ENCODE measurements at regions of chr7 and their contacts with region 1.

Region 1: DNA sequence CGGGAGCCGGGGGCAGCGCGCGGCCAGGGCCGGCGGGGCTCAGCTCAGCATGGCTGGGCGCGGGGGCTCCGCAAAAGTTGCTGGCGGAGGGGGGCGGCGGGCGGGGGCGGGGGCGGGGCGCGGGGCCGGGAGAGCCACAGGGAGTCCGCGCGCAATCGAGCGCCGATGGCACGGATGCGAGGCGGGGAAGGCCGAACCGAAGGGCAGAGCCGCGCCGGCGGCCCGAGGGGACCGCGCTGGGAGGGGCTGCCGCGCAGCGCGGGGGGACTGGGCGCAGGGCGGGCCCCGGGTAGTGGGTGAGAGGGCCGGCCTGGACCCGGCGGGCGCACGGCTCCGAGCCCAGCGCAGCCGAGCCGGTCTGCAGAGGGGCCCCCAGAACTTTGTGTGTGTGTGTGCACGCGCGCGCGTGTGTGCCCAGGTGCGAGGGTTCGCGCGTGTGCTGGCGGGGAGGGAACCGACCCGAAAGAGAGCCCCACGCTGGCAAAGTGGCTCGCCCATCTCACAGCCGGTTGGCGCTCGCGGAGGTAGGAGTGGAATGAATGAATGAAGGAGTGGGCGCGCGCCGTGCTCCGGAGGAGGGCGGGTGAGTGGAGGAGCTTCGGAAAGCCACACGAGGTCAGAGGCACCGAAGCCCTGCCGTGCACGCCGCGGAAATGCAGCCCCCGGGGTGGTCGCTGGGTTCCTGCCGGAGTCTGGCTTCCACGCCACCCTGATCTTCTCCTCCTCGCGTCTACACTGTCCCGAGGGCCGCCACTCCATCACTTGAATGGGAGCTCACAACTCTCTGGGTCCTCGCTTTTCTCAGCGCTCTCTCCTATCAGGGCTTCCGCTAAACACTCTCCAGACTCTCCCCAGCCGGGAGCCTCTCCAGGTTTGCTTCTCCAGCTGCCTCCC is at the start of gene HIPK2:
- DNase-seq: peak; percentile 85
- H3K4me3 ChIP-seq: peak within 1 kb of the TSS; percentile 92
- H3K27ac ChIP-seq: peak within 1 kb of the TSS; percentile 65
- H3K4me1 ChIP-seq: peaks cover 16% of the 10 kb centered on the region
- H3K27me3 ChIP-seq: peaks cover 17% of the 10 kb centered on the region
- CTCF ChIP-seq: no peak
- total RNA-seq, gene HIPK2: 30.7 and 32.4 TPM in 2 replicates

Region 2: DNA sequence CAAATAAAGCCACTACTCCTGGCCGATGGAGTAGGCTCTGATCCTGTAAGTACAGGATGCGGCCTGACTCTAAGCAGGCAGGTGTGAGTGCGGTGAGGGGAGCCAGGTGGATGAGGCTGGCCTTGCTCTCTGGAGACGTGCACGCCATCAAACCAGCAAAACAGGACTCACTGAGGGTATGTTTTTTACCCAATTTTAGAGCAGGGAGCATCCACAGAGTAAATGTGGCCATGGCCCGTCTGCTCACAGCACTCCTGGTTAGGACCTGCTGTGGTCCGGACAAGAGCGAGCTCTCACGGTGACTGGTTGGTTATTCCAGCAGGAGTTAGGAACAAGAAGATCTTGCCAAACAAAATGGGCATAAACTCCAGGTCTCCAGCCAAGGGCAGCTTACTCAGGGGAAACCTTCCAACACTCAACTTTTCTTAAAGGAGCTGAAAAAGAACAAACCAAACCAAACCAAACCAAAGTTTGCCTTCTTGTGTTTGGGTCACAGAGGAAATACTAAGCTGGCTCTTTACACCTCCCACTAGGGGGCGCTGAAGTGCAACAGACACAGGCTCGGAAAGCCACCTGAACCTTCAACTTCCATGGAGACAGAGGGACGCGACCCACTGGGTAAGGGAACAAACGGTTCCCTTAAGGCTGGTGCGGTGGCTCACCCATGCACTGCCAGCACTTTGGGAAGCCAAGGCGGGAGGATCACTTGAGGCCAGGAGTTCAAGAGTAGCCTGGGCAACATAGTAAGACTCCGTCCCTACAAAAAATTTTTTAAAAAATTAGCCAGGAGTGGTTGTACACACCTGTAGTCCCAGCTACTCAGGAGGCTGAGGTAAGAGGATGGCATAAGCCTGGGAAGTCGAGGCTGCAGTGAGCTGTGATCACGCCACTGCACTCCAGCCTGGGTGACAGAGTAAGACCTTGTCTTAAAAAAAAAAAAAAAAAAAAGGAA is 132.3 kb before region 1 on chr7:
- CTCF ChIA-PET with region 1: no interaction called
- POLR2A ChIA-PET with region 1: no interaction called
- intact Hi-C with region 1: loop called (anchors 5 kb)
- DNase-seq: peak; percentile 87
- H3K4me3 ChIP-seq: no peak overlapping the region
- H3K27ac ChIP-seq: no peak overlapping the region
- H3K4me1 ChIP-seq: no peaks in the 10 kb centered on the region
- H3K27me3 ChIP-seq: no peaks in the 10 kb centered on the region
- CTCF ChIP-seq: peak; percentile 89

Measured in A673 (cell line).